ENCODE measurements at regions of chr9 and their contacts with region 1.

Region 1: DNA sequence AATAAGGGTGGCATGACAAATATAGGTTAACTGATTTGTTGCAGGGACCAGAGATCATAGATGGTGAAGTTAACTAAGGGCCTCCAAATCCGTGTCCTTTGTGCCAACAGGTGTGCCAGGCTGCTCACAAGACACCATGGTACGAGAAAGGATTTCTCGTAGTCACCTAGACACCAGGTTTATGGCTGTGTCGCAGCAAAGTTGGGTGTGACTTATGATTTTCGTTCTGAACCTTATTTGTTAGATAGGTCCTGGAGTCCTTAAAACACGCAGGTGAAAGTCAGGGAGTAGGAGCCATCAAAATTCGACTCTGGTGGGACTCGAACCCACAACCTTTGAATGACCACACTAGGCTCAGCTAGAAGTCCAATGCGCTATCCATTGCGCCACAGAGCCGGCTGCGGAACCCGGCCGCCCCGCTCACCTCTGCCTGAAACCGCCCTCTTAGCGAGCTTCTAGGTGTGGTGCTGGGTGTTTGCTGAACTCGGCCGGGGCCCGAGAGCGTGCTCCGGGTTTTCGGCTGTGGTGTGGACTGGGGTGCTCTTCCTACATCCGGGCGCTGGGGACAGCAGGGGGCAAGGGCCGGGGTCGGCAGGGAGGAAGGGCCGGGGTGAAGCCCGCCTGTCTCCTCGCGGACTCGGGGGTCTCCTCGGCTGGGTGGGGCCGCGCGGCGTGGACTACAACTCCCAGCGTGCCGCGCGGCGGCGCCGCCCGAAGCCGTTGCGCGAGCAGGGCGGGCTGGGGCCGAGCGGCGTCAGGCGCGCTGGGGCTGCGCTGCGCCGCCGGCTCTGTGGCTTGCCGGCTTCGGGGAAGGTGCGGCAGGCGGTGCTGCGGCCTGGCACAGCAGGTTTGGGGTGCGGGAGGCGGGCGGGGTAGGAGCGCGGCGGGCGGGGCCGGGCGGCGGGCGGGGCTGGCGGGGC is at the start of gene SLC27A4:
- DNase-seq: peak; percentile 91
- ATAC-seq: peak; percentile 85
- H3K4me3 Mint-ChIP-seq: peak within 1 kb of the TSS; percentile 87
- H3K27ac Mint-ChIP-seq: peak within 1 kb of the TSS; percentile 84
- H3K4me1 Mint-ChIP-seq: peaks cover 5% of the 10 kb centered on the region; the same call in 1 of the 2 replicates
- H3K27me3 Mint-ChIP-seq: no peaks in the 10 kb centered on the region
- CTCF ChIP-seq: no peak
- total RNA-seq, gene SLC27A4: 20.8 to 23.8 TPM (median 21.2 TPM) in 3 replicates

Region 2: GRCh38 chr9:128275996-128276573 is 63.9 kb before region 1 on chr9 and contains the starts of genes GOLGA2 and SWI5:
- CTCF ChIA-PET with region 1: interaction called, 10 read pairs
- POLR2A ChIA-PET with region 1: interaction called, 6 read pairs
- DNase-seq: peak; percentile 100
- ATAC-seq: peak; percentile 91
- H3K4me3 Mint-ChIP-seq: peak within 1 kb of the TSS; percentile 92
- H3K27ac Mint-ChIP-seq: peak within 1 kb of the TSS; percentile 97
- H3K4me1 Mint-ChIP-seq: peaks cover 14% of the 10 kb centered on the region
- H3K27me3 Mint-ChIP-seq: no peaks in the 10 kb centered on the region; the same call in 1 of the 2 replicates
- CTCF ChIP-seq: no peak
- total RNA-seq, gene GOLGA2: 54.7 to 66.3 TPM (median 58.8 TPM) in 3 replicates
- total RNA-seq, gene SWI5: 26.2 to 32.0 TPM (median 31.7 TPM) in 3 replicates

Region 3: GRCh38 chr9:128304149-128304974 is 35.7 kb before region 1 on chr9:
- CTCF ChIA-PET with region 1: interaction called, 17 read pairs
- POLR2A ChIA-PET with region 1: interaction called, 5 read pairs
- DNase-seq: no peak
- ATAC-seq: no peak
- H3K4me3 Mint-ChIP-seq: no peak overlapping the region
- H3K27ac Mint-ChIP-seq: peak overlapping the region; percentile 33; the same call in 1 of the 2 replicates
- H3K4me1 Mint-ChIP-seq: no peaks in the 10 kb centered on the region
- H3K27me3 Mint-ChIP-seq: peaks cover 2% of the 10 kb centered on the region; the same call in 1 of the 2 replicates
- CTCF ChIP-seq: no peak

Region 4: DNA sequence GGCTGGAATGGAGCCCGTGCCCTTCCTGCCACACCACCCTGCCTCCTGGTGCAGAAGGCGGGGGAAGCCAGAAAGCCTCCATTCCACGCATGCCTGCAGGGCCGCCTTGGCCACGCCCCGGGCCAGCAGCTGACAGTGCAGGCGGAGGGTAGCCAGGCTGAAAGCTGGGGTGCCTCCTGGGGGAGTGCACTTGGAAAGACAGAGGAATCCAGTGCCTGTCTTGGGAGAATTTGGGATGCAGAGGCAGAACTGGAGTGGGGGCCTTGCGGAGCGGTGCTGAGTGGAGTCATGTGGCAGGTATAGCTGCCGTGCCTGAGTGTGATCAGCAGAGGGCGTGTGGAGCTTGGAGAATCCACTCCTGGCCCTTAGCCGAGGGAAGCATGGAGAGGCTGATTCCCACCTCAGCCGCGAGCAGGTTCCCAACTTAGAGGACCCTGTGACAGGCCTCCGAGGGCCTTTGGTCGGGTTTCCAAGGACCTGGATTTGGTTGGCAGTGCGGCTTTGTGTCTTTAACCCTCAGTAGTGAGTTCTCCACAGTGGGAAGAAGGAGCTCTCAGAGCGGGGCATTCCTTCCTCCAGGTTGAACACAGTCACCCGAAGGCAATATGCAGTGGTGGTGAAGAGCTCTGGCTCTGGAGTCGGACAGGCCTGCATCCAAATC is 22.1 kb after region 1 on chr9:
- CTCF ChIA-PET with region 1: interaction called, 49 read pairs
- POLR2A ChIA-PET with region 1: no interaction called
- DNase-seq: peak; percentile 88
- ATAC-seq: peak; percentile 66
- H3K4me3 Mint-ChIP-seq: peak overlapping the region; percentile 43
- H3K27ac Mint-ChIP-seq: no peak overlapping the region
- H3K4me1 Mint-ChIP-seq: peaks cover 40% of the 10 kb centered on the region
- H3K27me3 Mint-ChIP-seq: peaks cover 57% of the 10 kb centered on the region
- CTCF ChIP-seq: peak; percentile 85

Region 5: GRCh38 chr9:128383007-128383753 is 43.1 kb after region 1 on chr9:
- CTCF ChIA-PET with region 1: interaction called, 18 read pairs
- POLR2A ChIA-PET with region 1: no interaction called
- DNase-seq: peak; percentile 69
- ATAC-seq: peak; percentile 83
- H3K4me3 Mint-ChIP-seq: peak overlapping the region; percentile 28
- H3K27ac Mint-ChIP-seq: no peak overlapping the region
- H3K4me1 Mint-ChIP-seq: peaks cover 56% of the 10 kb centered on the region
- H3K27me3 Mint-ChIP-seq: peaks cover 84% of the 10 kb centered on the region
- CTCF ChIP-seq: no peak

Region 6: DNA sequence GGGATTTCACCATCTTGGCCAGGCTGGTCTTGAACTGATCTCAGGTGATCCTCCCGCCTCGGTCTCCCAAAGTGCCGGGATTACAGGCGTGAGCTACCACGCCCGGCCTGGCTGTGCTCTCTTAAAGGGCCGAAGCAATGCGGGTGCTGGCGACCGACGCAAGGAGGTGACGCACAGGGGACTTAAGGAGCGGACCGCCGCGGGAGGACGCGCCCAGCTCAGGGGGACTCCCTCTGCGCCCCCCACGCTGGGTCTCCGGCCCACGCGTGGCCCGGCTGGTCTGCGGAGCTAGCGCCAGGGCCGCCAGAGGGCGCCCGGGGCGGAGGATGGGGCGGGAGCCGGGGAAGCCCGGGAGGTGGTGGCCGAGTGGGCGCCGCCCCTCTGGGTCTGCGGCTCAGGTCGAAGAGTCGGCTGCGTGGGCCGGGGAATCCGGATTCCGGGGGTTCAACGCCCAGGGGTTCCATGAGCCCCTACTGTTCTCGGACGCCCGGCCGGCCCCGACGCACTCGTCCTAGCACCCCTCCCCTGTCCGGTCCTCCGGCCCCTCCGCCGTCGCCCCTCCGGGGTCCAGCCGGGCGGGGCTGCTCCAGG is 80.1 kb after region 1 on chr9:
- CTCF ChIA-PET with region 1: interaction called, 29 read pairs
- POLR2A ChIA-PET with region 1: no interaction called
- DNase-seq: peak; percentile 63
- ATAC-seq: peak; percentile 55
- H3K4me3 Mint-ChIP-seq: peak overlapping the region; percentile 67
- H3K27ac Mint-ChIP-seq: no peak overlapping the region
- H3K4me1 Mint-ChIP-seq: peaks cover 27% of the 10 kb centered on the region
- H3K27me3 Mint-ChIP-seq: peaks cover 51% of the 10 kb centered on the region
- CTCF ChIP-seq: peak; percentile 42